Left ventricle myocardium superior (tissue), 1 donor: ENCODE measurements at regions of chr7 and their contacts with region 1.

Region 1: GRCh38 chr7:115910541-115911164 is 119.9 kb downstream of the TFEC start:
- DNase-seq: no peak
- ATAC-seq: no peak

Region 2: DNA sequence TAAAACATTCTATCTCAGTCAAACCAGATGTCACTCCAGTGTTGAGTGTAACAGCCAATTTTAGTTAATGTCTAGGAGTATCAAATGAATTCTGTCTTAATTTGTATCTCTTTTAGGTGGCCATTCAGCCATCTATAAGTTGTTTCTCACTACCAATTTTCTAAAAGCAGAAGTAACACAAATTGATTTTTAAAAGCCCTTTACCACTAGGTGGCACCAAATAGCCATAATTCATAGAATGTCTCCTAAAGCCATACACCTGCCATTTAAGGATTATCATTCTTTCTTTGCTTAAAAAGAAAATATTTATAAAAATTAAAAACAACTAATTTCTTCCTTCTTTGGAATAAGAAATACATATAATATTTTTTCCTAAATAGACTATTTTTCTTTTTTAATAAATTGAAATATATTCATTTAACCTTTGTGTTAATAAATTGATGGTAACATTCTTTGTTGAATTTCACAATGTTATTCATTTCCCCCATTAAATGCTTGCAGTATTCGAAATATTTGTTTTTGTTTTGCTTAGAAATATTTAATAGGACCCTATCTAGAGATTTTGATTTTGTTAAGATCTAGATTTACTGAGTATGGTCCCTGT is 1884.1 kb before region 1 on chr7:
- intact Hi-C with region 1: loop called (anchors 10 kb)
- DNase-seq: no peak
- ATAC-seq: no peak

Region 3: DNA sequence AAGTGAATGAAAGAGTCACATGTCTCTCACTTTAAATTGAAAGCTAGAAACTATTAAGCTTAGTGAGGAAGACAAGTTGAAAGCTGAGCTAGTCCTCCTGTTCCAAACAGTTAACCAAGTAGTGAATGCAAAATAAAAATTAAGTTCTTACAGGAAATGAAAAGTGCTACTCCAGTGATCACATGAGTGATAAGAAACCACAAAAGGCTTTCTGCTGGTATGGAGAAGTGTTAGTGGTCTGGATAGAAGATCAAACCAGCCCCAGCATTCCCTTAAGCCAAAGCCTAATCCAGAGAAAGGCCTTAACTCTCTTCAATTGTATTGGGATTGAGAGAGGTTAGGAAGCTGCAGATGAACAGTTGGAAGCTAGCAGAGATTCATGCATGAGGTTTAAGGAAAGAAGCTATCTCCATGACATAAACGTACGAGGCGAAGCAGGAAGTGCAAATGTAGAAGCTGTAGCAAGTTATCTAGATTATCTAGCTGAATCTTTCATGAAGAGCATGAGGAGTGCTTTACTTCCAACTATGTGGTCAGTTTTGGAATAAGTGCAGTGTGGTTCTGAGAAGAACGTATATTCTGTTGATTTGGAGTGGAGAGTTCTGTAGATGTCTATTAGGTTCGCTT is 727.1 kb before region 1 on chr7:
- intact Hi-C with region 1: no loop called
- DNase-seq: no peak
- ATAC-seq: no peak

Region 4: DNA sequence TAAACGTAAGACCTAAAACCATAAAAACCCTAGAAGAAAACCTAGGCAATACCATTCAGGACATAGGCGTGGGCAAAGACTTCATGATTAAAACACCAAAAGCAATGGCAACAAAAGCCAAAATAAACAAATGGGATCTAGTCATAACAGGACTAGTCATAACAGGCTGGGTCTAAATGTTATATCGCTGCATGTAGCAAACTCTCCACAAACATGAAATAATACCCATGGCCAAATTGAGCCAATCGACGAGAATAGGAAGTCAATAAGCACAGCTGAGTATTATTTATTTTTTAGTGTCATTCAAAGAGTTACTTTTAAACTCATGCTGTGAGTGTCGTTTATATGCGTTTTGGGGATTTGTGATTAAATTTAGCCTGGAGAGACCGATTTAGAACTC is 105.2 kb before region 1 on chr7:
- intact Hi-C with region 1: no loop called
- DNase-seq: no peak
- ATAC-seq: no peak